ENCODE measurements at regions of chr14 and their contacts with region 1.

Region 1: GRCh38 chr14:81533536-81534343 is at the start of gene SEL1L:
- DNase-seq: peak; percentile 100
- H3K4me3 ChIP-seq: peak within 1 kb of the TSS; percentile 54 to 84 (median 72)
- H3K27ac ChIP-seq: peak within 1 kb of the TSS; percentile 39
- H3K4me1 ChIP-seq: peaks cover 7% of the 10 kb centered on the region
- H3K27me3 ChIP-seq: no peaks in the 10 kb centered on the region
- CTCF ChIP-seq: no peak
- POLR2A ChIP-seq: peak; percentile 73
- total RNA-seq, gene SEL1L: 94.5 and 95.0 TPM in 2 replicates

Region 2: GRCh38 chr14:81485372-81485771 is 48.4 kb before region 1 on chr14:
- CTCF ChIA-PET with region 1: no interaction called
- POLR2A ChIA-PET with region 1: no interaction called
- dilution Hi-C with region 1: no loop called
- intact Hi-C with region 1: no loop called
- DNase-seq: no peak
- H3K4me3 ChIP-seq: no peak overlapping the region
- H3K27ac ChIP-seq: no peak overlapping the region
- H3K4me1 ChIP-seq: no peaks in the 10 kb centered on the region
- H3K27me3 ChIP-seq: no peaks in the 10 kb centered on the region
- CTCF ChIP-seq: no peak
- POLR2A ChIP-seq: no peak

Region 3: GRCh38 chr14:81519200-81520011 is 14.3 kb before region 1 on chr14:
- CTCF ChIA-PET with region 1: interaction called, 4 read pairs
- POLR2A ChIA-PET with region 1: no interaction called
- dilution Hi-C with region 1: no loop called
- intact Hi-C with region 1: loop called (anchors 1 kb)
- DNase-seq: peak; percentile 58
- H3K4me3 ChIP-seq: no peak overlapping the region
- H3K27ac ChIP-seq: peak overlapping the region; percentile 61
- H3K4me1 ChIP-seq: peaks cover 12% of the 10 kb centered on the region
- H3K27me3 ChIP-seq: no peaks in the 10 kb centered on the region
- CTCF ChIP-seq: no peak
- POLR2A ChIP-seq: no peak